Prostate gland (tissue), 2 donors: ENCODE measurements at regions of chr18 and their contacts with region 1.

Region 1: DNA sequence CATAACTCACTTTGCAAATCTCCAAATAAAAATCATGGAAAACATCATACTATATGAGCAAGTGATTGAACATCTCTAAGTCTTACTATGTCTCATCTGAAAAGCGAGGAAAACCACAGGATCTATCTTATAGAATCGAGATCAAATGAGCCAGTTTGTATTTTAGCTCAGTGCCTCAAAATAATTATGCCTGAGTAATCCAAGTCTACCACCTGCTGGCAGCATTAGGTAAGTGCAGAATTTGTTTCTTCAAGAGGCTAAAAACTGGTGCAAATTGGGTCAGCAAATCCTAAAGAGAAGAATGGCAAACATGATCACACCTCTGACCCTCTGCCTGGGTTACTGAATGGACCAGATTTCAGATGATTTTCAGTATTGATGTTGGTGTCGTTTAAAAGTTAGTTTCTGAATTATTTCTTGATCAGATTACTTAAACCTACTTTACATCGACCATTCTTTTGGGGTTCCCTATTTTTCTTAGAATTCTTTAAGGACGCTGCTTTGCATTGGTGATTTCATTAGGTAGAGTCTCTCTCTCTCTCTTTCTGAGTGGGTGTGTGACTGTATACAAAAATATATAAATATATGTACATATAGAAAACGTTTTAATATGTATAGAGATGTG is 12.7 kb upstream of the FHOD3 start:
- DNase-seq: peak; percentile 53
- H3K4me3 ChIP-seq: no peak overlapping the region
- H3K27ac ChIP-seq: no peak overlapping the region
- H3K4me1 ChIP-seq: no peaks in the 10 kb centered on the region
- H3K27me3 ChIP-seq: no peaks in the 10 kb centered on the region
- CTCF ChIP-seq: peak; percentile 61 to 92 (median 90)
- POLR2A ChIP-seq: no peak

Region 2: GRCh38 chr18:36015629-36016028 is 269.2 kb before region 1 on chr18:
- intact Hi-C with region 1: loop called (anchors 5 kb)
- DNase-seq: no peak
- H3K4me3 ChIP-seq: no peak overlapping the region
- H3K27ac ChIP-seq: no peak overlapping the region
- H3K4me1 ChIP-seq: peaks cover 5% of the 10 kb centered on the region
- H3K27me3 ChIP-seq: no peaks in the 10 kb centered on the region
- CTCF ChIP-seq: no peak
- POLR2A ChIP-seq: no peak

Region 3: GRCh38 chr18:36095936-36096519 is 188.8 kb before region 1 on chr18:
- intact Hi-C with region 1: loop called (anchors 5 kb)
- DNase-seq: no peak
- H3K4me3 ChIP-seq: no peak overlapping the region
- H3K27ac ChIP-seq: peak overlapping the region in 1 of 2 donors; percentile 68
- H3K4me1 ChIP-seq: peaks cover 5% of the 10 kb centered on the region
- H3K27me3 ChIP-seq: no peaks in the 10 kb centered on the region
- CTCF ChIP-seq: peak in 3 of 4 experiments; percentile 65 to 87 (median 74)
- POLR2A ChIP-seq: no peak